Dorsolateral prefrontal cortex (tissue), 120 donors: ENCODE measurements at regions of chr13 and their contacts with region 1.

Region 1: DNA sequence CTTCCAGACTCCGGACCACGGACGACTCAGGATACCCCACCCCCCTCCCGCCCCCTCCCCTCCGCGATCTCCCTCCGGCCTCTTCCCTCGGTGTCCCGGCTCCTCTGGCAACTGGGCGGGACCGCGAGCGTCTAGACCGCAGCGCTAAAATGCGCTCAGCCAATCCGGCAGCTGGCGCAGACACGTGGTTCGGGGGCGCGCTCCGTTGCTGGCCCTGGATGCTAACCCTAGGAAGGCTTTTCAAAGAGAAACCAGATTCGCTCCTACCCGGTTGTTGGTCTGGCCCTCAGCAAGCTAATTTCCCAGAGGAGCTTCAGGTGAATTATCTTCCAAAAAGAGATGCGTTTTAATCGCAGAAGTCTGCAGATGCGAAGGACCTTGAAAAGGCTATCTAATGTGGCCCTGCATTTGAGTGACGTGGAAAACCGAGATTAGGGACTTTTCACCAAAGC is at the start of gene DZIP1:
- DNase-seq: peak; percentile 55 to 89 (median 84)
- H3K4me3 ChIP-seq: peak within 1 kb of the TSS; percentile 49 to 83 (median 72)
- H3K27ac ChIP-seq: peak within 1 kb of the TSS in 56 of 59 donors; percentile 17 to 94 (median 76)
- H3K27me3 ChIP-seq: peaks cover 0 to 27% (median 0%) of the 10 kb centered on the region in 45 donors
- CTCF ChIP-seq: no peak
- total RNA-seq, gene DZIP1: 33.8 to 111 (median 75.1) TPM

Region 2: DNA sequence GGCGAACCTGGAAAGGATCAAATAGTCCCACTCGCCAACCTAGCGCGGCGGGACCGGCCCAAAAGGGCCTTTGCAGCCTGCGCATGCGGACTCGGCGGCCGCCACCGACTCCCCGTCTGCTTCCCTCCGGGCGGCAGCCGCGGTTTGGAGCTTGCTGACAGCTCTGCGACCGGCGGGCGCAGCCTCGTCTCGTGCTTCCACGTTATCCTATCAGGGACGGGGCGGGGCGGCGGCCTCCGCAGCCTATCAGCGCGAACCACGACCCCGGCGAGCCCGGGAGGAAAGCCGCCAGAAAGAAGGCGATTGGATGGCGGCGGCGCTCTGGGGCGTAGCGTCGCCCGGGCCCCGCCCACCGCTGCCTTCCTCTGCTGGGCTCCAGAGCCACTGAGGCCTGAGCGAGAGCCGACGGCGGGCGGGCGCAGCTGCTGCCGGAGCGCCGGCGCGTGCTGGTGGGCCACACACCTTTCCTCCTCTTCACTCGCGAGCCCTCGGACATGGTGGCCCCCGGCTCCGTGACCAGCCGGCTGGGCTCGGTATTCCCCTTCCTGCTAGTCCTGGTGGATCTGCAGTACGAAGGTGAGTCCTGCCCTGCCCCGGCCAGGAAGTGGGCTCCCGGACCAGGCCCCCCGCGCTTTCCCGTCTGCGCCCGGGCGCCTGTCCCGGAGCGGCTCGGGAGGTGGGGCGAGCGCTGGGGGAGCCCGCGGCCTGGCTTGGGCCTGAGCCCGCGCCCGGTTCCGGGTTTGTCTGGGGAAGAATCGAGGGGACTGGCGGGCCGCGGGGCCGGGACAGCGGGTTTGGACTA is 32.3 kb after region 1 on chr13 and contains the start of gene DNAJC3:
- intact Hi-C with region 1: loop called (anchors 2 to 5 kb)
- DNase-seq: peak; percentile 95 to 100 (median 98)
- H3K4me3 ChIP-seq: peak within 1 kb of the TSS; percentile 71 to 98 (median 92)
- H3K27ac ChIP-seq: peak within 1 kb of the TSS; percentile 33 to 97 (median 90)
- H3K27me3 ChIP-seq: no peaks in the 10 kb centered on the region
- CTCF ChIP-seq: peak in 23 of 56 donors; percentile 6 to 48 (median 22)
- total RNA-seq, gene DNAJC3: 15.8 to 41.6 (median 22.6) TPM